ENCODE measurements at regions of chr17 and their contacts with region 1.

Region 1: GRCh38 chr17:80327518-80327917 is 66.9 kb downstream of the RNF213 start:
- H3K4me3 Mint-ChIP-seq: no peak overlapping the region
- H3K27ac Mint-ChIP-seq: no peak overlapping the region
- H3K4me1 Mint-ChIP-seq: peaks cover 30% of the 10 kb centered on the region
- H3K27me3 Mint-ChIP-seq: no peaks in the 10 kb centered on the region

Region 2: DNA sequence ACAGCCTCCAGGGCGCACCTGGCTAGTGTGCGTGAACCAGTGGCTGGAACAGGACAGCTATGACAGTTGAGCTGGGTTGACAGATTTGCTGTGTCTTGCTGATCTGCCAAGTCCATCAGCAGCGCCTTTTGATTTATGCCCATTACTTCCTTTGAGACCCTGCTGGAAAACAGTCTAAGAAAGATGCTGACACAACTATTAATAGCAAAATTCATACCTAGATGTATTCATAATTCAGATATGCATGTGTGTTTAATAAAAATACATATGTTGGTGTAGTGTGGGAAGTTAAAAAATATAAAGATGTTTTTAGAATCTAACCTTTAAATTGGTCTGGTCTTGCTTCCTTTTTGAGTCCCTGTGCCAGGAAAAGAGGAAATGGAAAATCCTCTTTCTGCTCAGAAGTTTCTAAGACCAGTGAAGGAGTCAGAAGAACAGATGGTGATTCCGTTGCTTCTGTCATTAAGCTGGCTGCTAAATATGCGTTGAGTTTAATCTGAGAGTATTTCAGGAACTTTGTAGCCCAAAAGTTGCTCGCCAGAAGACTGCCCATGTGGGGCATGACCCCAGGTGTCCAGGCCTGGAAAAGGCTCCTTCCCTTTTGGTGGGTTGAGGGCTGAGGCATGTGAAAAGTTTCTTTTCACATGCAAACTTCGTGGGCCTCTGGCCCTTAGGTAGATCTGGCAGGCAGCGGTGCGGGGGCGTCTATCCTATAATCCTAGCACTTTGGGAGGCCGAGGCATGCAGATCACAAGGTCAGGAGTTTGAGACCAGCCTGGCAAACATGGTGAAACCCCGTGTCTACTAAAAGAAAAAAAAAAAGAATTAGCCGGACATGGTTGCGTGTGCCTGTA is 47.4 kb after region 1 on chr17:
- intact Hi-C with region 1: loop called (anchors 10 kb)
- H3K4me3 Mint-ChIP-seq: no peak overlapping the region
- H3K27ac Mint-ChIP-seq: no peak overlapping the region
- H3K4me1 Mint-ChIP-seq: peaks cover 12% of the 10 kb centered on the region
- H3K27me3 Mint-ChIP-seq: no peaks in the 10 kb centered on the region

Measured in dendritic cell treated with granulocyte-macrophage colony-stimulating factor and Interleukin-4, amounts not matched to agents 40 ng/mL and 50 ng/mL, for 4 days (primary cell).